WTC11 (cell line): ENCODE measurements at regions of chr17 and their contacts with region 1.

Region 1: GRCh38 chr17:73215447-73215846 is 22.6 kb downstream of the COG1 start:
- DNase-seq: peak; percentile 23
- ATAC-seq: peak; percentile 93
- H3K4me3 Mint-ChIP-seq: no peak overlapping the region
- H3K27ac Mint-ChIP-seq: peak overlapping the region; percentile 51
- H3K4me1 Mint-ChIP-seq: peaks cover 16% of the 10 kb centered on the region
- H3K27me3 Mint-ChIP-seq: no peaks in the 10 kb centered on the region
- CTCF ChIP-seq: peak; percentile 24; the same call in 1 of the 2 replicates

Region 2: DNA sequence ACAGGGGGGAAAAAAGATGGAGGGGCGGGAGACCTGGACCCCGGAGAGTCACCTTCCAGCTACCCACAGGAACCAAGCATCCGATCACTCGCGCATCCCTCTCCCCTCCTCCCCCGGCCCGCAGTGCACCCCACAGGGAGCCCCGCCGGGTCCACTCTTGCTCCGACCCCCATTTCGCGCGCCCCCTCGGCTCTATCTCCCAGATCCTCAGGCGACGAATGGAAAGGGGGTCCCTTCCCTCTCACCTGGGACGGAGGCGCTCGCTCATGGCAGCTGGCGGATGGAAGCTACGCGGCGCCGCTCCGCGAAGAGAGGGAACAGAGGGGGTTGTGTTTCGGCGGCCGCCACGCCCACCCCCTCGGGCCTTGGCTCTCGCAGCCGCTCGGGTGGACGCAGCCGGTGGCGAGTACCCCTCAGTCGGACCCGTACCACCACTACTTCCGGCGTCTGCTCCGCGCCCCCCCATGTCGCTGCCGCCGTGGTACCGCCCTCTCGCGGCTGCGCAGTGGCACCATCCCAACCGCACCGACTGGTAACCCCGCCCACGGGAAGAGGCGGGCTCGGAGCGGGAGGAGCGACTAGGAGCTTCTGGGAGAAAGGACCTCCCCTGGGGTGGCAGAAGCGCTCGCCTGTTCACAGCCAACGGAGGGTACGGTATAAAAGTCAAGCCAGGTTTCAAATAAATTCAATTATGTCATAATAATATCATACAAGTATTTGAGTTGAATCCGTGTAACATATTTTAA is 16.6 kb after region 1 on chr17:
- CTCF ChIA-PET with region 1: interaction called, 18 read pairs
- POLR2A ChIA-PET with region 1: interaction called, 8 read pairs
- DNase-seq: peak; percentile 97
- ATAC-seq: peak; percentile 92
- H3K4me3 Mint-ChIP-seq: peak overlapping the region; percentile 97
- H3K27ac Mint-ChIP-seq: peak overlapping the region; percentile 97
- H3K4me1 Mint-ChIP-seq: peaks cover 47% of the 10 kb centered on the region
- H3K27me3 Mint-ChIP-seq: no peaks in the 10 kb centered on the region
- CTCF ChIP-seq: no peak